ENCODE measurements at regions of chr15 and their contacts with region 1.

Region 1: DNA sequence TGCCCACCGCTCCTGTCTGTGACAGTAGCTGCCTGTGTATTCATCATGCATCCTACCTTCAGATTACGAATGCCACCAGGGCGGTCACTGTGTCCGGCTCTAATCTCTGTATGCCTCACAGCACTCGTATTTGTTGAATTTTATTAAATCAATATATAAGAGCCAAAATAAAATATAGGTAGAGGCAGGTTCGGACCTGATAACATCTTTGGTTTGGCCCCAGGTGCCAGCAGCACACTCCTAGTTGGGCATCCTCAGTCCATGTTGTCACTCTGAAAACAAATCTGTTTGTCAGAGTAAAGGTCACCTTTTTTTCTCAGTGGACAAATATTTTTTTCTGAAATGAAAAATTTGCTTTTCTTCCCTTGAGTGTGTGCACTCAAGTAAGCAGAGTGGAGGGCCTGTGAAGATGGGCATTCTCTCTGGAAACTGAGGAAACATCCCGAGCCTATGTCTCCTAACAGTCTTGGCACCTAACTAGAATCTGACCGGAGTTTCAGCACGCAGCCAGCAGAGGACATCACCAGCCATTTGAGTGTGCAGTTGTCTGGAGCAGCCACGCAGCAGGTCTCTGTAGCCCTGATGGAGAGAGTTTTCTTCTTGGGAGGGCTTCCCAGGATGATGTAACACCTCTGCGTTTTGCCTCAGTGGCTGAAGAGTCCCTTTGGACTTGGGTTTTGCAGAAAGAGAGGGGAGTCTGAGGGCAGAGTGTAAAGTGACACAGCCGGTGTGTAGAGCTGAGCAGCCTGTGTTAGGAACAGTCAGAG is 51.3 kb downstream of the ABHD2 start:
- DNase-seq: no peak
- ATAC-seq: peak; percentile 33
- H3K4me3 ChIP-seq: no peak overlapping the region
- H3K27ac ChIP-seq: peak overlapping the region; percentile 53 to 97
- H3K4me1 ChIP-seq: peaks cover 3 to 7% of the 10 kb centered on the region in 2 donors
- H3K27me3 ChIP-seq: no peaks in the 10 kb centered on the region

Region 2: DNA sequence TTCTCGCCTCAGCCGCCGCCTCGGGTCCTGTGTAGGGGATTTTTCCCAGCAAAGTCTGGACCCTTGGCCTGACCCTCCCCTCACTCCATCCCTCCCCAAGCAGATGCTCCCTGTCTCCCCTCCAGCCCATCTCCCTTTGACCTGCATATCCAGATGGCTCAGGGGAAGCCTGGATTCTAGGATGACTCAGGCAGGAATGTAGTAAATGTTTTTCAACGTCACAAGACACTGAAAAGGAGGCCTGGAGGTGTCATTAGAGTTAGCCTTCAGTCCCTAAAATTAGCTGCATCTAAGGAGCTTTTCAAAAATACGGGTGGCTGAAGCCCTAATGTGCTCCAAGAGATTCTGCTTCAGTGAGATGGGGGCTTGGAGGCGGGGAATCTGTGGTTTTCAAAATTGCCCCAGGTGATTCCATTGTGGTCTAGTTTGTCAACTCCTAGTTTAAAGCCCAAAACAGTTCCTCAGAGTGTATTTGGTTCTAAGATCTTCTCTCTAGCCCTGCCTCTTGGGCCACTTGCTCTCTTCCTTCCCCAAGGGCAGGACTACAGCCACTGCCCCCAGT is 329.1 kb before region 1 on chr15:
- intact Hi-C with region 1: no loop called
- DNase-seq: no peak
- ATAC-seq: no peak
- H3K4me3 ChIP-seq: no peak overlapping the region
- H3K27ac ChIP-seq: no peak overlapping the region
- H3K4me1 ChIP-seq: no peaks in the 10 kb centered on the region
- H3K27me3 ChIP-seq: no peaks in the 10 kb centered on the region

Region 3: GRCh38 chr15:89068325-89068784 is 71.2 kb before region 1 on chr15:
- intact Hi-C with region 1: no loop called
- DNase-seq: peak in 1 of 2 donors; percentile 58
- ATAC-seq: no peak
- H3K4me3 ChIP-seq: no peak overlapping the region
- H3K27ac ChIP-seq: no peak overlapping the region
- H3K4me1 ChIP-seq: no peaks in the 10 kb centered on the region
- H3K27me3 ChIP-seq: no peaks in the 10 kb centered on the region

Region 4: DNA sequence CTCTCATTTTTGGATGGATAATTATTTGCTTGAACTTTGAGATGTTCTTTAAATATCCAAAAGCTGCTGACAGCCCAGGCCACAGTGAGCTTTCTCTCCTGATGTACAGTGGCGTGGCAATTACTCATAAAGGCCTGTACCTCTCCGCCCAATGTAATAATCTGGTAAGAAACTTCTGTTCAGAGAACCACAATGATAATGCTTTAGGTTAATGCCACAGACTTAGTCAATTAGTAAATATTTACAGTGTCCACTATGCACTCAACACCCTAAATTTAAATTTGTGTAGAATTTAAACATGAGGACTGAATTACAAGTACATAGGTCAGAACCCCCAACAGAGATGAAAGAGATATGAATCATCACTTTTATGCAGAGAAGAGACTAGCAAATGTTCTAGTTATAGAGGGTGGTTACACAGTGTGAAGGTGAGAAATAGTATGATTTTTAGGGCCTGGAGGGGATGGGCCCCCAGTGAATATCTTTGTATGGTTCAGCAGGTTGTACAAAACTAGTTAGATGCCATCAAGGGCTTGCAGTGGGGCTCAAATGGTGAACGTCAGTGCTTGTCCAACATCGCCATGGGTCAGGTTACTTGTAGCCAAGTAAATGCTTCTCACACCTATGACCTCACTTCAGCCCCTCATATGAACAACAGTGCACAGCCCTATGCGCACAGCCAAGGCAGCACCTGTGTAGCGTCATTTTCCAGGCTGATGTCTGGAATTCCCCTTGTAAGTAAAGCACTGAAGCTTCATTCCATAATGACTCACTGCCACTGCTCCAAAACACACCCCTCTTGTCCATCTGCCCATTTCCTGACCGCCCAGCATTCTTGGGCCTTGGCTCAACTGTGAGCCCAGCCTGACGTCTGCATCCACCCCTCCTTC is 38.0 kb before region 1 on chr15:
- intact Hi-C with region 1: loop called (anchors 5 kb)
- DNase-seq: peak; percentile 88 to 91
- ATAC-seq: peak; percentile 92
- H3K4me3 ChIP-seq: no peak overlapping the region
- H3K27ac ChIP-seq: peak overlapping the region; percentile 64 to 98
- H3K4me1 ChIP-seq: peaks cover 12 to 26% of the 10 kb centered on the region in 2 donors
- H3K27me3 ChIP-seq: no peaks in the 10 kb centered on the region

Region 5: DNA sequence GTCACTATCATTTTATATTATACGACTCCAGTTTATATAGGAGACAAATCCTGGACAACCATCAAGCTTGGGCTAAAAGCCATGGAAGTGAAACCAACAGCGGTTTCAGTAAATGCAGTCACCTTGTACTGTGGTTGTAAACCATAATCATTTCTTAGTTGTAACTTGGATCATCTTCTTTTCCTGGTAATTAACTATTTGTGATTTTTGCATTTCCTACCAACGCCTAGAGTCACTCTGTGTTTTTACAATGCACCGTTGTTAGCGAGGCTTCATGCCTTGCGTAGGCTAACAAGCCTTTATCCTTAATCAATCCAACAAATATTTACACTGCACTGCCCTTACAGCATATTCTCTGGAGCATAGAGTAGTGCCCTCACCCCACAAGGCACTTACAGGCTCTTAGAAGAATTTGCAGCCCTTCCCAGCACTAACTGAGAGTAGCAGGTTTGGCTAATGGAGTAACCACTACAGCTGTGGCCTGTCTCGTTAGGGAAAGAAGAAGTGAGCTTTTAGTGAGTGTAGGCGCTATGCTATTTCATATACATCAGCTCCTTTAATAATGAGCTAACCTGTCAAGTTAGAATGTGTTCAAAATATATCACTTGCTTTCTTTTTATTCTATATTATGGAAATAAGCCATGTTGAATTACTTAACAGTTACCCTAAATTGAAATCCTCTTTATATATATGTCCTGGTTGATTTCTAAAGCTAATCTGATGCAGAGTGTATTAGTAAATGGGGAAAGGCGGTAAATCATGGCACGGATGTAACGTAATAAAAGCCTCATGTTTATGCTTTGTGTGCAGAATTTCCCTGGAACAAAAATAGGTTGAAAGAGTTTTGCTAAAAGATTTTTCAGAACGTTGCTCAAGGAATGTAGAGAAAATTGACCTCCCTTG is 11.4 kb after region 1 on chr15:
- intact Hi-C with region 1: loop called in 1 of 2 experiments (anchors 1 kb)
- DNase-seq: no peak
- ATAC-seq: no peak
- H3K4me3 ChIP-seq: no peak overlapping the region
- H3K27ac ChIP-seq: no peak overlapping the region
- H3K4me1 ChIP-seq: peaks cover 0 to 1% of the 10 kb centered on the region in 2 donors
- H3K27me3 ChIP-seq: no peaks in the 10 kb centered on the region

Region 6: DNA sequence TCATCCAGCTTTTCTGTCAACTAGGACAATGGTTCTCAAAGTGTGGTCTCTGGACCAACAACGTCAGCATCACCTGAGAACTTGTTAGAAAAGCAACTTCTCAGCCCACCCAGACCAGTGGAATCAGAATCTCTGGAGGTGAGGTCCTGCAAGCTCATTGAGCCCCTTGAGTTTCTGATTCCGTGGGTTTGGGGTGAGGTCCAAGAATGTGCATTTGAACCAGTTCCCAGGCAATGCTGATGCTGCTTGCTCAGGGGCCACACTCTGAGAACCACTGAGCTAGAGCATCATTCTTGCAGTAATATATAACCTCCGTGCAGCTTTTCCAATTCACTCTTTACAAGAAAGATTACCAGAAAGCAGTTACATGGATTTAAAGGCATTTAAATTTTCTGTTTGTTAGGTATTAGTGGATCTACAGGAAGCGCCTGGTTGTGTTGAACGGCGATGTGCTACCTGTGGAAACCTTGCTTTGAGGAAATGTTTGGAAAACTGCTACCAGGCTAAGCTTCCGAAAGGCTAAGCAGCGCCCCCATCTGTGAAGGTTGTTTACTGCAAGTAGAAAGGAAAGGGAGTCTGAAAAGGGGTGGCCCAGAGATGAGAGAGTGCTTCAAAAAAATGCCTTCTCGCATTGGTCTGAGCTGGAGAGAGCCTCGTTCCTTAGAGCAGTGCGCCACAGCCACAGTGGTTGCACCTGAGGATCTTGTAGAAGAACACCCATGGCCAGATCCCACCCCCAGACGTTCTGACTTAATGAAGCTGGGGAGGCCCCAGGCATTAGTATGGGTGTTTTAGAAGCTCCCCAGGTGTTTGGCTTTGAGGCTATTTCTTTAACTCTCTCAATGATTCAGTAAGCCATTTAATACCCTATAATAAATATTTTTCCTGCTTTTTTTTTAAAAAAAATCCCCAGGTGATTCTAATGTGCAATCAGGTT is 31.8 kb after region 1 on chr15:
- intact Hi-C with region 1: loop called (anchors 5 kb)
- DNase-seq: no peak
- ATAC-seq: peak; percentile 51
- H3K4me3 ChIP-seq: no peak overlapping the region
- H3K27ac ChIP-seq: no peak overlapping the region
- H3K4me1 ChIP-seq: peaks cover 0 to 14% of the 10 kb centered on the region in 2 donors
- H3K27me3 ChIP-seq: no peaks in the 10 kb centered on the region

Region 7: DNA sequence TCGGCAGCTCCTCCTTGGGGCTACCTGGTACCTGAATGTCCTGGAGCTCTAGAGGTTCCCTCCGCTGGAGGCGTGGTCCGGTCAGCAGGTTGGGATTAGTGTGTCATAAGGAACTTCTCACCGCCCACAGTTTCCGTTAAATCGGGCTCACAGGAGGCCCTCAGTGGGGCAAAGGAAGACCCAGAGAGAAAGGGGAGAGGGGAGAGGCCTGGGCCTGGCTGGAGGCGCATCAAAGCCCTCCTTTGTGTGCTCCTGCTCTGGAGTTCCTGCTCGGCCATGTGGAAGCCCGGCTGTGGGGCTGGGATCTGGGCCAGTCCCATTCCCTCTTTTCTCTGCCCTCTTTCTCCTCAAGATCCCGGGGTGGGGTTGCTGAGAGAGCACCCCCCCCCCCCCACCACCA is 82.0 kb after region 1 on chr15 and contains the start of gene RLBP1:
- intact Hi-C with region 1: no loop called
- DNase-seq: no peak
- ATAC-seq: no peak
- H3K4me3 ChIP-seq: no peak within 1 kb of the TSS
- H3K27ac ChIP-seq: no peak within 1 kb of the TSS
- H3K4me1 ChIP-seq: no peaks in the 10 kb centered on the region
- H3K27me3 ChIP-seq: no peaks in the 10 kb centered on the region
- total RNA-seq, gene RLBP1: not detected